HCT116 (cell line): ENCODE measurements at regions of chr17 and their contacts with region 1.

Region 1: DNA sequence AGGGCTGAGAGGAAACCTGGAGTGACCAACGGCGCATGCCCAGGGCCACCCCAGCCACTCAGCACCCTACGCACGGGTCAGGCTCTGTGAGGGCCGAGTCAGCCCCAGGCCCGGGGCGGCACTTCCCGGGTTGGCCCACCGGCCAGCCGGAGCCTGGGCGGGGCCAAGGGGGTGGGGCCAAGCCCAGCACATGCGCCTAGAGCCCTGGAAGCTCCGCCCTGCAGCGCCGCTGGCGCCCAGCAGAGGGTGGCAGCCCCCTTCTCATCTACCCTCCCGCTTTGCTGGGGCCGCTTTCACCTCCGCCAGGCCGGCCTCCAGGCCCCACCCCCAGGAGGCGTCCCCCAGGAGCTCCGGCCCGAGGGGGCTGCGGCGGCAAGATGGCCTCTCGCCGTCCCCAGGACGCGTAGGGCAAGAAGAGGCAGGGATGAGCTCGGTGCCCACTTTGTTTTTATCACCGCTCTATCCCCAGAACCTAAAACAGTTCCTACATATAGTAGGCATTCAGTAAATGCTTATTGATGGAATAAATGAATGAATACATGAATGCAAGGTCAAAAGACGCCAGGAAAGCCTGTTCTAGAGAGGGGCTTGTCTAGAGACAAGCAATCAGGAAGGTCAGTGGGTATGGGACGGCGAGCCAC is 31.3 kb downstream of the MYO18A start:
- DNase-seq: peak; percentile 85
- ATAC-seq: peak; percentile 83
- H3K4me3 ChIP-seq: peak overlapping the region; percentile 34 to 53
- H3K27ac ChIP-seq: peak overlapping the region; percentile 81
- H3K4me1 ChIP-seq: peaks cover 74 to 93% of the 10 kb centered on the region in 2 experiments
- H3K27me3 ChIP-seq: no peaks in the 10 kb centered on the region
- CTCF ChIP-seq: peak; percentile 77 to 96 (median 92)
- POLR2A ChIP-seq: peak; percentile 63
- RAD21 ChIP-seq: peak; percentile 97

Region 2: GRCh38 chr17:28937044-28937729 is 211.7 kb before region 1 on chr17:
- CTCF ChIA-PET with region 1: no interaction called
- POLR2A ChIA-PET with region 1: no interaction called
- RAD21 ChIA-PET with region 1: no interaction called
- intact Hi-C with region 1: no loop called
- DNase-seq: no peak
- ATAC-seq: no peak
- H3K4me3 ChIP-seq: no peak overlapping the region
- H3K27ac ChIP-seq: no peak overlapping the region
- H3K4me1 ChIP-seq: no peaks in the 10 kb centered on the region
- H3K27me3 ChIP-seq: no peaks in the 10 kb centered on the region
- CTCF ChIP-seq: no peak
- POLR2A ChIP-seq: no peak
- RAD21 ChIP-seq: no peak

Region 3: DNA sequence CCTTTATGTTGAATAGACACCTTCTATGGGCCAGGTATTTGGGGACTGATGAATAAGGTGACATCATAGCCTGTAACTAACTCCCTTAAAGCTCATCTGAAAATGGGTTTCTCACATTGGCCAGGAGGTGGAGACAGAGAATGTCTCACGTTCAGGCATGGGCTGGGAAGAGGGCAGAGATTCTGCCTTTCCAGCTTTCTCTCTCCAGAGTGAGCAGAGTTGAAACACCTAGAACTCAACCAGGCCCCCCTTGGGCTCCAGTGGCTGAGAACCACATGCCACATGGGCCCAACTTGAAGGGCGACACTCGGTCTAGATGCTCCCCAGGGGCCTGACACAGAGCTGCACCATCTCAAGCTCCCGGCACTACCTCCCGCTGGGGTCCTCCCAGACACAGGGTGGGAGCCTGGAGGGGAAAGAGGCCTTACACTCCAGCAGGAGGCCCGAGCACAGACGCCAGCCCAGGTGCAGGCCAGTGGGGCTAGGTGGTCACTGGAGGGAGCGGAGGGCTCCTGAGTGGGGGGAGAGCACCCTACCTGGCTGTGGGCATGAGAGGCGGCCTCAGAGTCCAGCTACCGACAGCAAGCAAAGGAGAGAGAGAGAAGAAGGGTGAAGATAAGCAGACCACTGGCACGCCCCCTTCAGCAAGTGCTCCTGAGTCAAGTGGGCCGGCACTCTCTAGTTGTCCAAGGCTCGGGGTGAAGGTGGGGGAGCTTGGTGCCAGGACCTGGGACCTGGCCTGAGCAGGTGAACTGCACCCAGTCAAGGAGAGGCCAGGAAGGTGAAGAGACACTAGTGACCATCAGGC is 24.6 kb before region 1 on chr17:
- CTCF ChIA-PET with region 1: interaction called, 110 read pairs
- POLR2A ChIA-PET with region 1: interaction called, 6 read pairs
- RAD21 ChIA-PET with region 1: interaction called, 20 to 22 read pairs
- intact Hi-C with region 1: loop called (anchors 1 kb)
- DNase-seq: no peak
- ATAC-seq: peak; percentile 91
- H3K4me3 ChIP-seq: no peak overlapping the region
- H3K27ac ChIP-seq: no peak overlapping the region; the same call in 1 of the 2 replicates
- H3K4me1 ChIP-seq: peaks cover 14 to 21% of the 10 kb centered on the region in 2 experiments; a peak in 3 of 4 replicates
- H3K27me3 ChIP-seq: no peaks in the 10 kb centered on the region
- CTCF ChIP-seq: peak; percentile 66 to 92 (median 78)
- POLR2A ChIP-seq: no peak
- RAD21 ChIP-seq: peak; percentile 95

Region 4: GRCh38 chr17:29180034-29180787 is 31.3 kb after region 1 on chr17 and contains the start of gene MYO18A:
- CTCF ChIA-PET with region 1: interaction called, 54 read pairs
- POLR2A ChIA-PET with region 1: interaction called, 10 read pairs
- RAD21 ChIA-PET with region 1: interaction called, 5 to 14 read pairs
- intact Hi-C with region 1: loop called (anchors 2 kb)
- DNase-seq: no peak
- ATAC-seq: peak; percentile 82
- H3K4me3 ChIP-seq: peak within 1 kb of the TSS; percentile 58 to 64
- H3K27ac ChIP-seq: peak within 1 kb of the TSS; percentile 85
- H3K4me1 ChIP-seq: peaks cover 32 to 54% of the 10 kb centered on the region in 2 experiments
- H3K27me3 ChIP-seq: no peaks in the 10 kb centered on the region
- CTCF ChIP-seq: peak; percentile 63 to 92 (median 80)
- POLR2A ChIP-seq: no peak
- RAD21 ChIP-seq: peak; percentile 65
- total RNA-seq, gene MYO18A: 37.2 TPM

Region 5: DNA sequence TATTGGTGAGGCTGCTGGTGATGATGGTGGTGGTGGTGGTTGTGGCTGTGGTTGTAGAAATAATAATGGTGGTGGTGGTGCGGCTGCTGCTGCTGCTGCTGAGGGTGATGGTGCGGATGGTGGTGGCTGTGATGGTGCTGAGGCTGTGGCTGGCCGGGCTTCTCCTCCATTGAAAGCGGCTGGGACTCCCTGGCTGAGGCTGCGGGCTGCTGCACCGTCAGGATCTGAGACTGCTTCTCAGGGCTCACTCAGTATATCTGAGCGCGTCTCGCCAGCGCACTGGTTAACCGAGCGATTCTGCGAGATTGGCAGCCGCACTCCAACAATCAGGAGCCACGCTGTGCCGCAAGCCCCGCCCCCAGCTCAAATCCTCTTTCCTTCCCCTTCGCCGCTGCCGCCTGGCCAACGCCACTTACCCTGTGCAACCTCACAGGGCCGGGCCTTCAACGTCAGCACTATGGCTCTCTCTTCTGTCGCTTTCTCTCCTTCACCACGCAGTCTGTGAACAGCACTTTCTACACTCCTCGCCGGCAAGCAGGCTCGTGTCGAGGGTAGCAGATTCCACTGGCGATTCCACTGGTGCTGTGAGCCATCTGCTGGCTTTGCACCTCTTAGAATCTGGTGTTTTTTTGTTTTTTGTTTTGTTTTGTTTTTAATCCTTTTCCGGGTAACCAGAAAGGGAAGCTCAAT is 145.1 kb after region 1 on chr17 and contains the start of gene NUFIP2:
- CTCF ChIA-PET with region 1: interaction called, 11 read pairs
- POLR2A ChIA-PET with region 1: interaction called, 5 read pairs
- RAD21 ChIA-PET with region 1: interaction called in 1 of 2 experiments, 7 read pairs
- intact Hi-C with region 1: loop called (anchors 2 kb)
- DNase-seq: peak; percentile 96
- ATAC-seq: peak; percentile 92
- H3K4me3 ChIP-seq: peak within 1 kb of the TSS; percentile 97
- H3K27ac ChIP-seq: peak within 1 kb of the TSS; percentile 97
- H3K4me1 ChIP-seq: peaks cover 11 to 19% of the 10 kb centered on the region in 2 experiments; a peak in 3 of 4 replicates
- H3K27me3 ChIP-seq: no peaks in the 10 kb centered on the region
- CTCF ChIP-seq: no peak
- POLR2A ChIP-seq: peak; percentile 99
- RAD21 ChIP-seq: no peak
- total RNA-seq, gene NUFIP2: 66.5 TPM

Region 6: GRCh38 chr17:29589524-29590410 is 440.9 kb after region 1 on chr17 and contains the start of gene GIT1:
- CTCF ChIA-PET with region 1: interaction called, 3 read pairs
- POLR2A ChIA-PET with region 1: no interaction called
- RAD21 ChIA-PET with region 1: no interaction called
- intact Hi-C with region 1: loop called (anchors 10 kb)
- DNase-seq: peak; percentile 59
- ATAC-seq: peak; percentile 55
- H3K4me3 ChIP-seq: peak within 1 kb of the TSS; percentile 86 to 96
- H3K27ac ChIP-seq: peak within 1 kb of the TSS; percentile 94
- H3K4me1 ChIP-seq: peaks cover 32 to 73% of the 10 kb centered on the region in 2 experiments
- H3K27me3 ChIP-seq: no peaks in the 10 kb centered on the region
- CTCF ChIP-seq: no peak
- POLR2A ChIP-seq: peak; percentile 23
- RAD21 ChIP-seq: no peak
- total RNA-seq, gene GIT1: 76.5 TPM